Caco-2 (cell line): ENCODE measurements at regions of chr1 and their contacts with region 1.

Region 1: GRCh38 chr1:177948336-177948972 is 21.4 kb downstream of the SEC16B start:
- DNase-seq: peak; percentile 58 to 64
- H3K4me3 ChIP-seq: no peak overlapping the region
- H3K4me3 Mint-ChIP-seq: no peak overlapping the region
- H3K27ac Mint-ChIP-seq: no peak overlapping the region
- H3K4me1 ChIP-seq: no peaks in the 10 kb centered on the region
- H3K4me1 Mint-ChIP-seq: no peaks in the 10 kb centered on the region
- H3K27me3 ChIP-seq: no peaks in the 10 kb centered on the region
- H3K27me3 Mint-ChIP-seq: peaks cover 4% of the 10 kb centered on the region
- CTCF ChIP-seq: peak; percentile 91 to 93

Region 2: DNA sequence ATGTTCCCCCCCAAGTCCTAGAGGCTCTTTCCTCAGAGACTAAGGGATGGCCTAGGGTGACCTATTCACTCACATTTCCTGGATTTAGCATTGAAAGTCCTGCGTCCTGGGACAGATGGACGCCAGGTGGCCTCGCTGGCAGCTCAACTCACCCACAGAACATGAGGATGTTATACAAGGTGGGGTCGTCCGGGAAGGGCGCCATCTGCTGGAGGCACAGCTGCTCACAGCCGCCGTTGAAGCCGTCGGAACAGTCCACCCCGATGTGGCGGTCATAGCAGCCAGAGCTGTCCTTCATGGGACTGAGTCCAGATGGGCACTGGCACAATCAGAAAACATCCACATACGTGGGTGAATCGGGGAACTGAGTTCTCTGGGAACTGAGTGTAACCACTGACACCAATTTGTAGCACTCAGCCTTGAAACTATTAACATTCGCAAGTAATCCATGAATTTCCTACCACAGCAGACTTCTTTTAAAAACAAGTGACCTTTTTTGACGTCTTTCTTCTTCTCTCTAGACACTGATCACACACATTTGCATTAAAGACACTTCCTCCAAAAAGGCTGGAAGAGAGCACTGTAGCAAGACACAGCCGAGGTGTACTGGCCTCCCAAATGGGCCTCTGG is 999.3 kb before region 1 on chr1:
- CTCF ChIA-PET with region 1: no interaction called
- POLR2A ChIA-PET with region 1: no interaction called
- intact Hi-C with region 1: loop called (anchors 1 kb)
- DNase-seq: peak; percentile 76 to 79
- H3K4me3 ChIP-seq: no peak overlapping the region
- H3K4me3 Mint-ChIP-seq: no peak overlapping the region
- H3K27ac Mint-ChIP-seq: no peak overlapping the region
- H3K4me1 ChIP-seq: no peaks in the 10 kb centered on the region
- H3K4me1 Mint-ChIP-seq: no peaks in the 10 kb centered on the region
- H3K27me3 ChIP-seq: no peaks in the 10 kb centered on the region
- H3K27me3 Mint-ChIP-seq: peaks cover 6% of the 10 kb centered on the region
- CTCF ChIP-seq: peak; percentile 68 to 83

Region 3: DNA sequence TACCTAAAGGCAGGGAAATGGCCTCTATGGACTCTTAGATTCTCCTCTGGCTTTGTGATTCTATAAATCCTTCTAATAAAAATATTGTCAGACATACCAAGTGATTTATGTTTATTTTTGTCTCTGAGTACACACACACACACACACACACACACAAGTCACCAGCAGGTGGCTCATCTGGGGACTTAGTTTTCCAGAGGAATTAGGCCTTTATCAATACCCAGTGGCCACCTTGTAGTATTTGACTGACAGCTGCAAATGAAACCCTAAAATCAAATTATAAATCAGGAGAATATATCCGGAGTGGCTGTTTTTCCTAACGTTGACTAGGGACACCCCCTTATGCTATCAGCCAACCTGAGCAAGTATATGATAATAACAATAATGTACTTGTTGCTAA is 519.2 kb before region 1 on chr1:
- CTCF ChIA-PET with region 1: no interaction called
- POLR2A ChIA-PET with region 1: no interaction called
- intact Hi-C with region 1: loop called (anchors 2 kb)
- DNase-seq: no peak
- H3K4me3 ChIP-seq: no peak overlapping the region
- H3K4me3 Mint-ChIP-seq: no peak overlapping the region
- H3K27ac Mint-ChIP-seq: no peak overlapping the region
- H3K4me1 ChIP-seq: no peaks in the 10 kb centered on the region
- H3K4me1 Mint-ChIP-seq: no peaks in the 10 kb centered on the region
- H3K27me3 ChIP-seq: no peaks in the 10 kb centered on the region; the same call in 1 of the 2 replicates
- H3K27me3 Mint-ChIP-seq: peaks cover 8% of the 10 kb centered on the region
- CTCF ChIP-seq: peak in 1 of 2 experiments; percentile 31

Region 4: DNA sequence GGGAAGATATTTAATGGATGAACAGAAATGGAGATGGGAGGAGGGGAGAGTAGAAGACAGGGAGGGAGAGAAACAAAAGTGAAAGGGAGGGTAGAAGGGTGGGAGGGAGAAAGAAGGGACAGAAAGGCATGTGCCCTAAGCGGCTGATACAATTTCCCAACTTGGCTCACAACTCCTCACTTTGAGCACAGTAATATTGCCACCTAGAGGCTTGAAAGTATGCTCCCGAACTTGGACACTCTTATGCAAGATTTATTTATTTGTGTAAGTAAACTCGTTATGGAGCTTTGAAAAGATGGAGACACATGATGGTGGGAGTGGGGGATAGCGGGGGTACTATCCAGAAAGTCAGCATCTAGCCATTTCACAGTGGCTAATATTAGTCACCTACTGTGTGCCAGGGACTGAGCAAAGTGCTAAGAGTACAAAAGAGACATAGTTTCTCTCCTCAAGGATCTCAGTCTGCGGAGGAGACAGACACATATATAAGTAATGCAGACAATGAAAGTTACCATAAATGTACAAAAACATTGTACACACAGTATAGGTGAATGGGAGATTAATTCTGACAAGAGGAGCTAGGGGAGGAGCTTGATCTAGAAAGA is 168.3 kb before region 1 on chr1:
- CTCF ChIA-PET with region 1: interaction called, 3 read pairs
- POLR2A ChIA-PET with region 1: no interaction called
- intact Hi-C with region 1: loop called (anchors 5 kb)
- DNase-seq: peak in 1 of 2 experiments; percentile 42
- H3K4me3 ChIP-seq: no peak overlapping the region
- H3K4me3 Mint-ChIP-seq: no peak overlapping the region
- H3K27ac Mint-ChIP-seq: no peak overlapping the region
- H3K4me1 ChIP-seq: no peaks in the 10 kb centered on the region
- H3K4me1 Mint-ChIP-seq: no peaks in the 10 kb centered on the region
- H3K27me3 ChIP-seq: no peaks in the 10 kb centered on the region; the same call in 1 of the 2 replicates
- H3K27me3 Mint-ChIP-seq: peaks cover 14% of the 10 kb centered on the region
- CTCF ChIP-seq: peak; percentile 60 to 66

Region 5: DNA sequence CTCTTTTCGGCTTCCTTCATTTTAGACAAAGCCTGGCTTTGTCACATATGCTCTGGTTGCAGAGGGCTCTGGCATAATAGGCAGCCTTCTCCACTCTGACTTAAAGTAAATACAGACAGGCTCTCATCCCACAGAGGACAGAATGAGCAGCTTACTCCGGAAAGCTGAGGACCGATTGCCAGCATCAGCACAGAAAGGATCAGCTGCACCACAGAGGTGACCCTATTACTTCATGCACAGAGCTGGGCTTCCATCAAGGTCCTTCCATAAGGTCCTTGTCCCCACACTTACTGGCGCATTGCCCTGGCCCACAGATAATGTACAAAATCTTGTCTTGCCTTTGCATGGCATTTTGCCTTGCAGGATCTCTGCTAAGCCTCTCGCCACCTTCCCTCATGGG is 46.2 kb before region 1 on chr1:
- CTCF ChIA-PET with region 1: no interaction called
- POLR2A ChIA-PET with region 1: no interaction called
- intact Hi-C with region 1: no loop called
- DNase-seq: no peak
- H3K4me3 ChIP-seq: no peak overlapping the region
- H3K4me3 Mint-ChIP-seq: no peak overlapping the region
- H3K27ac Mint-ChIP-seq: no peak overlapping the region
- H3K4me1 ChIP-seq: peaks cover 8% of the 10 kb centered on the region; the same call in 1 of the 2 replicates
- H3K4me1 Mint-ChIP-seq: peaks cover 7% of the 10 kb centered on the region
- H3K27me3 ChIP-seq: no peaks in the 10 kb centered on the region
- H3K27me3 Mint-ChIP-seq: no peaks in the 10 kb centered on the region
- CTCF ChIP-seq: no peak

Region 6: DNA sequence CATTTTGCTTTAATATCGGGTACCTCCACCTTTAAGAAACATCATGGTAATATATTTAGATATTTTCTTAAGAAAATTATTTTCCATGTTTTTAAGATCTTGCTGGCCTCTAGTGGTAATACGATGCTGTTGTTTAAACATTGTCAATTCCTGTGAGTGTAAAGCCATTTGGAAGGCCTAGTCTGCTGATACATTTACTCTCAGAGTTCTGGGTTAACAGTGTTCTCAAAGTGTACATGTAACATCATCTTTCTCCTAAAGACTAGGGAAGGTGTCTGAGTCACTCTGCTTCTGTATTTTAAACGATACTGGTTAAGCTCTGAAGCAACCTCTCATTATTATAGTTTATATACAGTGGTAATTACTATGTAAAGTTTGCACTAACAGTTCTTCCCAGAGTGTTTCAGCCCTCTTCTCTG is 334.5 kb after region 1 on chr1:
- CTCF ChIA-PET with region 1: no interaction called
- POLR2A ChIA-PET with region 1: no interaction called
- intact Hi-C with region 1: loop called (anchors 1 kb)
- DNase-seq: no peak
- H3K4me3 ChIP-seq: no peak overlapping the region
- H3K4me3 Mint-ChIP-seq: no peak overlapping the region
- H3K27ac Mint-ChIP-seq: no peak overlapping the region
- H3K4me1 ChIP-seq: peaks cover 2% of the 10 kb centered on the region; the same call in 1 of the 2 replicates
- H3K4me1 Mint-ChIP-seq: peaks cover 20% of the 10 kb centered on the region
- H3K27me3 ChIP-seq: no peaks in the 10 kb centered on the region
- H3K27me3 Mint-ChIP-seq: no peaks in the 10 kb centered on the region
- CTCF ChIP-seq: peak in 1 of 2 experiments; percentile 45